ENCODE measurements at regions of chr18 and their contacts with region 1.

Region 1: DNA sequence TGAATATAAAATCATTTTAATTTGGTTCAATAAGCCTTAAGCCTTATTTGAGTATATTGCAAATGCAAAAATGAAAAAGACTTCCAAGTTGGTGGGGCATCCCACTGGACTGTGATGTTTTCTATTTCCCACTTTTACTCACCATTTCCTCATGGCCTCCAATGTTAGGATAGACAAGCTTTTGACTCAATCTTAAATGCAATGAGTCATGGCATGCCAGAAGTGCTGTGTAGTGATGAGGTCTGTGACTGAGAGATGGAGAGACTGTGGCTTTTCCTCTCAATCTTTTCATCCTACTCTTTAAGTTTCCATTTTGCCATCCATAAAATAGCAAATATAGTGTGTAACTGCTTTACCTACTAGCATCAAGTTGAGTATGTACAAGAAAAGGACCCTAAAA is 1401.2 kb upstream of the CELF4 start:
- DNase-seq: no peak
- ATAC-seq: no peak
- H3K4me3 ChIP-seq: no peak overlapping the region
- H3K27ac ChIP-seq: no peak overlapping the region
- H3K4me1 ChIP-seq: no peaks in the 10 kb centered on the region
- H3K27me3 ChIP-seq: no peaks in the 10 kb centered on the region
- CTCF ChIP-seq: no peak
- POLR2A ChIP-seq: no peak
- RAD21 ChIP-seq: no peak

Region 2: DNA sequence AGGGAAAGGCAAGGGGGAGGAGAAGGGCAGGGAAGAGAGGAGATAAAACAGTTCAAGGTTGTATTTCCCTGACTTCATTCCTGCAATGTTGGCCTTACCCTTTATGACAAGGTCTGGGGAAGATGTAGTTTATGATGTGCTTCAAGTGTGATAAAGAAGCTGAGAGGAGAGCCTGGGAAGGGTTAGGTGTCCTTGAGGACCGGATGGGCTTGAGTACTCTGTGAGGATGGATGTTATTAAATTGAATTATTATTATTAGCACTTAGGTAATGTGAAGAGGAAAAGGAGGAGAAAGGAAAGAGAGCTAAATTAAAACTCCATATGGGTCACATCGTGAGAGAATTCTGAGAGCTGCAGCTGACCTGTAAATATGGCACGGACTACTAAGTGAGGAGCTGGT is 681.9 kb before region 1 on chr18:
- CTCF ChIA-PET with region 1: no interaction called
- POLR2A ChIA-PET with region 1: no interaction called
- dilution Hi-C with region 1: no loop called
- in situ Hi-C with region 1: no loop called
- intact Hi-C with region 1: no loop called
- DNase-seq: no peak
- ATAC-seq: no peak
- H3K4me3 ChIP-seq: no peak overlapping the region
- H3K27ac ChIP-seq: no peak overlapping the region
- H3K4me1 ChIP-seq: no peaks in the 10 kb centered on the region
- H3K27me3 ChIP-seq: no peaks in the 10 kb centered on the region
- CTCF ChIP-seq: no peak
- POLR2A ChIP-seq: no peak
- RAD21 ChIP-seq: no peak

Region 3: DNA sequence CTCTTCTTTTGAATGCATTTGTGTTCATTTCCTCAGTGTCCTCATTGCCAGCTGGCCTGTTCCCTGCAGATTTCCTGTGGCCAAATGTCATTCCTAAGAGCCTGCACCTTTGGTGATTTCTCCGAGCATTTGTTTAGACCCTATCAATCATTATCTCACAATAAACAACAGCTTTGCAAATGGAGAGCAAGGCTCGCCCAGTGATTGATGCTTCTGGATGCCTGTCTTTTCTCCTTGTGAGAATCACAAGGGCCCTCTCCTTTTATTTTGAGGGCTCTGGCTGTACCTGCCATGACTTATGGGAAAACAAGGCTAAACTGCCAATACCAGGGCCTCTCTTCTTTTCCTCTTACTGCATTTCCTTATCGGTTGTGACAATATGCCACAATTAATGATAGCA is 53.1 kb after region 1 on chr18:
- CTCF ChIA-PET with region 1: no interaction called
- POLR2A ChIA-PET with region 1: no interaction called
- dilution Hi-C with region 1: no loop called
- in situ Hi-C with region 1: no loop called
- intact Hi-C with region 1: loop called (anchors 2 kb)
- DNase-seq: no peak
- ATAC-seq: no peak
- H3K4me3 ChIP-seq: no peak overlapping the region
- H3K27ac ChIP-seq: no peak overlapping the region
- H3K4me1 ChIP-seq: no peaks in the 10 kb centered on the region
- H3K27me3 ChIP-seq: no peaks in the 10 kb centered on the region
- CTCF ChIP-seq: no peak
- POLR2A ChIP-seq: no peak
- RAD21 ChIP-seq: no peak

Measured in IMR-90 (cell line).